H1 (cell line): ENCODE measurements at regions of chr4 and their contacts with region 1.

Region 1: DNA sequence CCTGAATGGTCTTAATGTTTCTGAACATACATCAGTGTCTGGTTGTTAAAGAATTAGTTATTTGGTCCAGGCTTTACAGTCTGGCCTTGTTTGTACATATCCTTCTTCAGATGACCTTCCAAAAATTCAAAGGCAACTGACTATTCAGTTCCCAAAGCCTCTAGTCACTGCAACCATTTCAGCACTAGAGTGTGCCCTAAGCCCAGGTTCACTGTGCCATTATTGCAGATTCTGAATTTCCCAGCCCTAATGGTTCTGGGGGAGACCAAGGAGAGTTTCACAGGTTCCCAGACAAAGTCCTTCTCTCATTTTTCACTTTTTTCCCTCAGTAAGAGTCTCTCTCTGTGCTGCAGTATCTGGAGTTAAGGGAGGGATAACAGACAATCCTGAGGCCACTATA is 235.8 kb downstream of the TRAM1L1 start:
- DNase-seq: no peak
- H3K4me3 ChIP-seq: no peak overlapping the region
- H3K27ac ChIP-seq: no peak overlapping the region
- H3K4me1 ChIP-seq: no peaks in the 10 kb centered on the region
- H3K27me3 ChIP-seq: no peaks in the 10 kb centered on the region
- CTCF ChIP-seq: peak in 2 of 3 experiments; percentile 50 to 62; a peak in 3 of 4 replicates
- EP300 ChIP-seq: no peak
- POLR2A ChIP-seq: no peak
- RAD21 ChIP-seq: peak; percentile 75 to 77

Region 2: GRCh38 chr4:116862592-116862991 is 13.0 kb after region 1 on chr4:
- CTCF ChIA-PET with region 1: interaction called, 12 read pairs
- POLR2A ChIA-PET with region 1: no interaction called
- DNase-seq: no peak
- H3K4me3 ChIP-seq: no peak overlapping the region
- H3K27ac ChIP-seq: no peak overlapping the region
- H3K4me1 ChIP-seq: no peaks in the 10 kb centered on the region
- H3K27me3 ChIP-seq: no peaks in the 10 kb centered on the region
- CTCF ChIP-seq: no peak
- EP300 ChIP-seq: no peak
- POLR2A ChIP-seq: no peak
- RAD21 ChIP-seq: no peak